Calu3 (cell line): ENCODE measurements at regions of chr16 and their contacts with region 1.

Region 1: DNA sequence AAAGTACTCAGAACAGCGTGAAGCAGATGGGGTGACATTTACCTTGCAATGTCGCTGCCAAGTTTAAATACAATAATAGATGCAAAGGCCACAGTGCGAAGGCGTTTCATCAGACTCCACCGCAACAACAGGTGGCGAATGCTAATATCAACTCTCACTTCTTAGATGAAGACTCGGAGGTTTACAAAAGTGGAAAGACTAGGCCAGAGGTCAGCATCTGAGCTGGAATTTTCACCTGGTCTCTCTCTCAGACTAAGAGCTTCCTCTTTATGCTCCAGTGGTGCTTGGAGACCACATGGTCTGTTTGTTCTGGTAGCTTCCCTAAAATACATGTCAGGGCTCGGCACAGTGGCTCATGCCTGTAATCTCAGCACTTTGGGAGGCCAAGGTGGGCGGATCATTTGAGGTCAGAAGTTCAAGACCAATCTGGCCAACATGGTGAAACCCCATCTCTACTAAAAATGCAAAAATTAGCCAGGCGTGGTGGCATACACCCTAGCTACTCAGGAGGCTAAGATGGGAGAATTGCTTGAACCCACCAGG is 169.1 kb downstream of the XYLT1 start:
- DNase-seq: no peak
- H3K4me3 Mint-ChIP-seq: no peak overlapping the region
- H3K27ac Mint-ChIP-seq: no peak overlapping the region
- H3K4me1 Mint-ChIP-seq: peaks cover 51% of the 10 kb centered on the region
- H3K27me3 Mint-ChIP-seq: no peaks in the 10 kb centered on the region
- CTCF ChIP-seq: no peak

Region 2: DNA sequence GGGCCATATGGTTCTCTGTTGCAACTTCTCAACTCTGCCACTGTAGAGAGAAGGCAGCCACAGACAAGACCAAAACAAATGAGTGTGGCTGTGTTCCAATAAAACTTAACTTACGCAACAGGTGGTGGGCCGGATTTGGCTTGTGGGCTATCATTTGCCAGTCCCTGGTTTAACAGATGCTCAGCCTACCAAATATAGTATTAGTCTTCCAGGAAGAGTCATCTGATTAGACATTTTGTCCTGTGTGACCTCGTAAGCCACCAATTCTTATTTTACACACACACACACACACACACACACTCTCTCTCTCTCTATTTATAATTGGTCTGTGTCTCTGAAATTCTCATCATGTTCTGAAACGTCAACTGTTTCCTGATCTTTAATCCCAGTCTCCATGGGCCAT is 76.8 kb before region 1 on chr16:
- CTCF ChIA-PET with region 1: interaction called, 10 read pairs
- intact Hi-C with region 1: no loop called
- DNase-seq: no peak
- H3K4me3 Mint-ChIP-seq: no peak overlapping the region
- H3K27ac Mint-ChIP-seq: peak overlapping the region; percentile 1
- H3K4me1 Mint-ChIP-seq: peaks cover 27% of the 10 kb centered on the region
- H3K27me3 Mint-ChIP-seq: no peaks in the 10 kb centered on the region
- CTCF ChIP-seq: no peak

Region 3: GRCh38 chr16:17328932-17329331 is 27.3 kb after region 1 on chr16:
- CTCF ChIA-PET with region 1: no interaction called
- intact Hi-C with region 1: no loop called
- DNase-seq: no peak
- H3K4me3 Mint-ChIP-seq: no peak overlapping the region
- H3K27ac Mint-ChIP-seq: no peak overlapping the region
- H3K4me1 Mint-ChIP-seq: no peaks in the 10 kb centered on the region
- H3K27me3 Mint-ChIP-seq: no peaks in the 10 kb centered on the region
- CTCF ChIP-seq: no peak

Region 4: DNA sequence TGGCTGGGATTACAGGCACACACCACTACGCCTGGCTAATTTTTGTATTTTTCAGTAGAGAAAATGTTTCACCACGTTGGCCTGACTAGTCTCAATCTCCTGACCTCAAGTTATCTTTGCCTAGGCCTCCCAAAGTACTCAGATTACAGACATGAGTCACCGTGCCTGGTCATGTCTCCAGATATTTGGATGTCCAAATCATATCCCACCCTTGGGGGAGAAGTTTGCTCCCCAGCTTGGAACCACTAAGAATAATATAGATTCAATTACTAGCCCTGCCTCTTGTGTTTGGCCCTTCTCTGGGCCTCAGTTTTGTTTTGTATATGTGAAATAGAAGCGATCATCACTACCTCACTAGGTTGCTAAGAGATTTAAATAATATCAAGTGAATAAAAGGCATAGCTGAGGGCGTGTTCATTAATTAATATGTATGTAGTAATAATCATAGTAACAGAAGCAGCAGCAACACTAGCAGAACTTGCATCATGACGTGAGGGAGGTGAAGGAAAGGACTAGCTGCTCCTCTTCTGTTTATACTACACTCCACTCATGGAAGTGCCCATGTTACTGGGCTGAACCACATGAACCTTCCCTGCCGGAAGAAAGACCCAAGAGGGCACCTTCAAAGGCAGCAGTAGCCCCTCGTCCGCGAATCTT is 422.7 kb after region 1 on chr16:
- CTCF ChIA-PET with region 1: no interaction called
- intact Hi-C with region 1: no loop called
- DNase-seq: no peak
- H3K4me3 Mint-ChIP-seq: no peak overlapping the region
- H3K27ac Mint-ChIP-seq: no peak overlapping the region
- H3K4me1 Mint-ChIP-seq: no peaks in the 10 kb centered on the region
- H3K27me3 Mint-ChIP-seq: no peaks in the 10 kb centered on the region
- CTCF ChIP-seq: no peak